Activated CD8-positive, alpha-beta T cell treated with anti-CD3 and anti-CD28 coated beads, Interleukin-2, amount 10 ng/mL, durations not matched to agents 7 days and 5 days (primary cell): ENCODE measurements at regions of chr11 and their contacts with region 1.

Region 1: DNA sequence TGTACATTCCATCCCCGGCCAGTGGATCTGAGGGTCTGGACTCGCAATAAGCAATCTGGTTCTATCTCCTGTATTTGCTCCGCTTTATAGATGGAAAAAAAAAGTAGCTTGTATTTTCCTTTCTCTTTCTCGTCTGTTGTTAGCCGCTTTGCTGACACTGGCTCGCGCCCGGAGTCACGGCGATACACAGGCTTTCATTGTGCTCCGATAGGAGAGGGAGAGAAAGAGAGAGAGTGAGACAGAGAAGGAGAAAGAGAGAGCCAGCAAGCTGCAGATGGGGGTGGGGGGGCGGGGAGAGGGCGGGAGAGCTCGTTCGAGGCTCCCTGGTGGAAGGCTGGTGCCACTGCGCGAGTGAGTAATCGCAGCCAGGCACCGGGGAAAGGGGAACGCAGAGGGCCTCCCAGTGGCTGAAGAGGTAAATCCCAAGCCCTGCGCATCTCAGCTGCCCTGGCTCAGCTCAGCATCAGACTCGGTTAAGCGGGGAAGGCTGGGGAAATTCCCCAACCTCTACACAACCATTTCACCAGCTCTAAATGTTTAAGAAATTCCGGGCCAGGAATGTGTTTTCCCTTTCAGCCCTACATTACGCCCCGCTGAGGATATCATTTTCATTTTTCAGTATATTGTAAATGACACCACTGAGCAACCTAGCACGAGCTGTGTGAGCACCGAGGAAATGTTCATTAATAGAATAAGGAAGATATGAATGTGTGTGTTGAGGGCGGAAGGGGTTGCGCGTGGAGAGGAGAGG is at the start of gene MAML2:
- DNase-seq: peak; percentile 95
- ATAC-seq: peak; percentile 83
- H3K4me3 Mint-ChIP-seq: peak within 1 kb of the TSS; percentile 91
- H3K27ac Mint-ChIP-seq: peak within 1 kb of the TSS; percentile 95
- H3K4me1 Mint-ChIP-seq: peaks cover 31% of the 10 kb centered on the region
- H3K27me3 Mint-ChIP-seq: no peaks in the 10 kb centered on the region
- total RNA-seq, gene MAML2: 14.7 to 15.5 TPM

Region 2: GRCh38 chr11:95849087-95849825 is 493.9 kb before region 1 on chr11:
- CTCF ChIA-PET with region 1: interaction called, 18 read pairs
- POLR2A ChIA-PET with region 1: no interaction called
- DNase-seq: peak; percentile 29
- ATAC-seq: no peak
- H3K4me3 Mint-ChIP-seq: no peak overlapping the region
- H3K27ac Mint-ChIP-seq: no peak overlapping the region
- H3K4me1 Mint-ChIP-seq: peaks cover 2% of the 10 kb centered on the region
- H3K27me3 Mint-ChIP-seq: no peaks in the 10 kb centered on the region

Region 3: DNA sequence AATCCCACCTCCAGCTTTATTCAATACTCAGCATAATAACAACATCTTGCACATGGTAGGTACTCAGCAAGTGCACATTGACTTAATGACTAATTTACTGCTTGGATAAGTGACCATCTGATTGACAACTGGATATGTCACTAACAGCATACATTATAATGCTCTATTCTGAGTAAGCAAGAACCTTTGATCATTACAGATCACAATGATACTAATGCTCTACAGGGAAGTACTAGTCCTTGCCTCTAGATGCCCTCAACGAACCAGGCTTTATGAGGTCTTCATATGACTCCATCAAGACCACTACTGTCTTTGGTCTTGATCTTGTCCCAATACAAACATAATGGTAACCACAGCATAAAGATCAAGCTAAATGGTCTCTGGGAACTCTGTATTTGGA is 251.7 kb before region 1 on chr11:
- CTCF ChIA-PET with region 1: interaction called, 16 read pairs
- POLR2A ChIA-PET with region 1: interaction called, 7 read pairs
- DNase-seq: peak; percentile 35
- ATAC-seq: peak; percentile 63
- H3K4me3 Mint-ChIP-seq: no peak overlapping the region
- H3K27ac Mint-ChIP-seq: no peak overlapping the region
- H3K4me1 Mint-ChIP-seq: peaks cover 5% of the 10 kb centered on the region
- H3K27me3 Mint-ChIP-seq: no peaks in the 10 kb centered on the region

Region 4: DNA sequence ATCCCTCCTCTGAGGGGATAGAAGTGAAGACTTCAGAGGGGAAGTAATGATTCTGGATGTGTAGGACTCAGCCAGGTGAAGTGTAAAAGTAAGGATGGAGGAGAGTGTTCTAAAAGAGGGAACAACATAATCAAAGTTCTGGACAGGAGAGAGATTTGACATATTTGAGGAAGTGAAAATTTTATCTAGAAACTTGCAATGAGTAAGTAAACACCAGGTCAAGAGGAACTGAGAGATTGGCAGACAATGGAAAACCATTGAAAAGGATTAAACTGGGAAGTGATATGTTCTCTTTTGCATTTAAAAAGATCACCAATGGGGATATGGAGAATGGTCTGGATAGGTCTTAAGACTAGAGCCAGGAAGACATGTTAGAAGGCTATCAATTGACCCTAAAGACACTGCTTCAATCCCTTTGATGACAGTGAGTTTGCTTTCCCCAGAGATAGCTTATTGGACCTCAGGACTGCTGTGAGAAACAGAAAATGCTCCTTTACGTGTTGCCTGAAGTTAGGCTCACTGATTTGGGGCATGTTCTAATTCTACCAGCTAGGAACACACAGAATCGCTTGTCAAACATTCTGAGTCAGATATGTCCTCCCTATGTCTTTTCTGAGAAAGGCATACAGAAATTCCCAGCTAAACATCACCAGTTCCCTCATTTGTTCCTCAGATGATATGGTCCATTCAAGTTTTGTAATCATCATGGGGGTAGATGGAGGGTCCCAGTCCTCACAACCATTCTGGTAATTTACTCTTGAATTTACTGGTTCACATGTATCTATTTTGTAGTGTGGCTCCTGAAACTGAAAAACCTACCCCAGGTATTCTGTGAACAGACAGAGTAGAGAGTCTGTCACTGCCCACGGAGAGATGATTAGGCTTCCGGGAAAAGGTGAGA is 145.1 kb before region 1 on chr11:
- CTCF ChIA-PET with region 1: interaction called, 16 read pairs
- POLR2A ChIA-PET with region 1: interaction called, 3 read pairs
- DNase-seq: no peak
- ATAC-seq: no peak
- H3K4me3 Mint-ChIP-seq: no peak overlapping the region
- H3K27ac Mint-ChIP-seq: peak overlapping the region; percentile 10
- H3K4me1 Mint-ChIP-seq: peaks cover 52% of the 10 kb centered on the region
- H3K27me3 Mint-ChIP-seq: no peaks in the 10 kb centered on the region

Region 5: DNA sequence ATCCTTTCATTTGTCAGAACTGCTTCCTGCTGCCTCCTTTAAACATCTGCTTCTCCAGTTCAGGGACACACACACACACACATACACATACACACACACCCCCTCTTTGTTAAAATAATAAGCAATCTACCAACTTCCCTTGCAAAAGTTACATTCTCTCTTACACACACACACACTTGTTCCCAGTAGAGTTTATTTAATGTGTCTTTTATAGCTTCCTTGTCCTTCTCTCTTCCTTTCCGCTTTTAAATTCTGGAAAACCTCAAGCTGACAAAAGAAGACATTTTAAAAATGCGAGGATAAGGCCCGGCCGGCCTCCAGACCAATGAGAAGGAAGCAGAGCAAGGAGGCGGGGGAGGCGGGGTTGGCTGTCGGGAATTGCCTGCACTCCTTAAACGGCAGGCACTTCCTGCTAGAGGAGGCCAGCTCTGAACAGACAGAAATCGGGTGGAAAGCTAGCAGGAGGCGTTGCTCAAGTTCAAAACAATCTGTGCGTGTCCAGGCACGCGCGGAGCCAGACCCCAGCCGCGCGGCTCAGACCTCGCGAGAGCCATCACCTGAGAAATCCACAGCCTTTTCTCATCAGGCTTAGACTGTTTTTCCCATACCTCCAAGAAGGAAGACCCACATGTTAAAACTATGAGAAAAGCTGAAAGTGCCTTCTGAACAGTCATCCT is 100.0 kb before region 1 on chr11:
- CTCF ChIA-PET with region 1: interaction called, 96 read pairs
- POLR2A ChIA-PET with region 1: interaction called, 36 read pairs
- DNase-seq: peak; percentile 81
- ATAC-seq: peak; percentile 89
- H3K4me3 Mint-ChIP-seq: peak overlapping the region; percentile 75
- H3K27ac Mint-ChIP-seq: peak overlapping the region; percentile 87
- H3K4me1 Mint-ChIP-seq: peaks cover 55% of the 10 kb centered on the region
- H3K27me3 Mint-ChIP-seq: no peaks in the 10 kb centered on the region

Region 6: DNA sequence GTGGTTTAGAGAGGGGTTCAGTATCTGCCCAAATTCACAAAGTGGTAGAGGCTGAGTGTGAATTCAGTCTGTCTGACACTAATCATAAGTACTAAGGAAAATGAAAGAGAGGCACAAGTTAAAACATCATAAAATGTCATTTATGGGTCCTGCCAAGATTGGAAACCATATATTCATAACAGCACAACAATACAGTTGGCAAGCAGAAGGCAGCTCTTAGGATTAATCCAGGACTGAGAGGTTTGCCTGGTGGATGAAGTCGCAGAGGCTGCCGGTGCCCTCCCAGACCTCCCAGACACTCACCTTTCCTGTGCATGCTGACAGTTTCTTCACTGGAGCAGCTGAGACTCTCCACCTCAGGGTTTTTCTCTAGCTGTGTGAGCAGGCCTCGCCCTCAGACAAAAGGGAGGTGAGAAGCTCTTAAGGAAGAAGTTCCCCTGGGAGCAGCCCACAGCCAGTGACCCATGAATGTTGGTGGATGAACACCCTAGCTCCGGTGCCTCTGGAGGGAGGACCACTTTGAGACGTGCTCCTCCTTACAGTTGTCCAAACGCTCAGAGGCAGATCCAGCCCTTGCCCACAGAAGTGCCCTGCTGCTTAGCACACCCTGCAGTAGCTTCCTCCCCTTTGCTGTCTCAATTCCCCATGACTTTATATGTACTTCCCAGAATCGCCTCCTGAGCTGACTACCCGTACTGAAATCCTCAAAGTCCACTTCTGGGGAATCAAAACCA is 43.8 kb before region 1 on chr11:
- CTCF ChIA-PET with region 1: interaction called, 62 read pairs
- POLR2A ChIA-PET with region 1: interaction called, 7 read pairs
- DNase-seq: no peak
- ATAC-seq: peak; percentile 36
- H3K4me3 Mint-ChIP-seq: no peak overlapping the region
- H3K27ac Mint-ChIP-seq: peak overlapping the region; percentile 60
- H3K4me1 Mint-ChIP-seq: peaks cover 38% of the 10 kb centered on the region
- H3K27me3 Mint-ChIP-seq: no peaks in the 10 kb centered on the region

Region 7: DNA sequence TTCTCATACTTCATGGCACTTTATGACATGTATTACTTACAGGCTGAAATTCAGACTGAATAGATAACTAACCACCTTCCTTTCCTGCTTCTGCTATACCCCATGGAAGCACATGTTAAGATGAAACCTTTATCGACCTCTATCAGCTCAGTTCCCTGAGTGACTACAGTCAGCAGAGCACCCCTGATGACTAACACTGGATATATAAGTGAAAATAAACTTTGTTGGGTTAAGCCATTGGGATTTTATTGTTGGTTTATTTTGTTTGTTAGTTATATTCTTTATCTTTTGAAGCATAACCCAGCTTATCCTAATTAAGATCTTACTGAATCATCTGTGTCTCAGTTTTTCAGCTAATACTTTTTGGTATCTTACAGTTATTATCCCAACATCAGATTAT is 22.9 kb after region 1 on chr11:
- CTCF ChIA-PET with region 1: interaction called, 12 read pairs
- POLR2A ChIA-PET with region 1: no interaction called
- DNase-seq: no peak
- ATAC-seq: no peak
- H3K4me3 Mint-ChIP-seq: no peak overlapping the region
- H3K27ac Mint-ChIP-seq: no peak overlapping the region
- H3K4me1 Mint-ChIP-seq: no peaks in the 10 kb centered on the region
- H3K27me3 Mint-ChIP-seq: no peaks in the 10 kb centered on the region

Region 8: GRCh38 chr11:96447208-96448110 is 104.3 kb after region 1 on chr11:
- CTCF ChIA-PET with region 1: no interaction called
- POLR2A ChIA-PET with region 1: no interaction called
- DNase-seq: no peak
- ATAC-seq: no peak
- H3K4me3 Mint-ChIP-seq: no peak overlapping the region
- H3K27ac Mint-ChIP-seq: no peak overlapping the region
- H3K4me1 Mint-ChIP-seq: no peaks in the 10 kb centered on the region
- H3K27me3 Mint-ChIP-seq: peaks cover 17% of the 10 kb centered on the region

Region 9: GRCh38 chr11:96486894-96487595 is 143.9 kb after region 1 on chr11:
- CTCF ChIA-PET with region 1: no interaction called
- POLR2A ChIA-PET with region 1: no interaction called
- DNase-seq: no peak
- ATAC-seq: no peak
- H3K4me3 Mint-ChIP-seq: no peak overlapping the region
- H3K27ac Mint-ChIP-seq: no peak overlapping the region
- H3K4me1 Mint-ChIP-seq: no peaks in the 10 kb centered on the region
- H3K27me3 Mint-ChIP-seq: peaks cover 2% of the 10 kb centered on the region